WTC11 (cell line): ENCODE measurements at regions of chr12 and their contacts with region 1.

Region 1: GRCh38 chr12:52949413-52950331 is 754 bp downstream of the KRT18 start:
- DNase-seq: peak; percentile 43
- ATAC-seq: peak; percentile 30
- H3K4me3 Mint-ChIP-seq: peak overlapping the region; percentile 94
- H3K27ac Mint-ChIP-seq: peak overlapping the region; percentile 87
- H3K4me1 Mint-ChIP-seq: peaks cover 65% of the 10 kb centered on the region
- H3K27me3 Mint-ChIP-seq: no peaks in the 10 kb centered on the region
- CTCF ChIP-seq: no peak

Region 2: DNA sequence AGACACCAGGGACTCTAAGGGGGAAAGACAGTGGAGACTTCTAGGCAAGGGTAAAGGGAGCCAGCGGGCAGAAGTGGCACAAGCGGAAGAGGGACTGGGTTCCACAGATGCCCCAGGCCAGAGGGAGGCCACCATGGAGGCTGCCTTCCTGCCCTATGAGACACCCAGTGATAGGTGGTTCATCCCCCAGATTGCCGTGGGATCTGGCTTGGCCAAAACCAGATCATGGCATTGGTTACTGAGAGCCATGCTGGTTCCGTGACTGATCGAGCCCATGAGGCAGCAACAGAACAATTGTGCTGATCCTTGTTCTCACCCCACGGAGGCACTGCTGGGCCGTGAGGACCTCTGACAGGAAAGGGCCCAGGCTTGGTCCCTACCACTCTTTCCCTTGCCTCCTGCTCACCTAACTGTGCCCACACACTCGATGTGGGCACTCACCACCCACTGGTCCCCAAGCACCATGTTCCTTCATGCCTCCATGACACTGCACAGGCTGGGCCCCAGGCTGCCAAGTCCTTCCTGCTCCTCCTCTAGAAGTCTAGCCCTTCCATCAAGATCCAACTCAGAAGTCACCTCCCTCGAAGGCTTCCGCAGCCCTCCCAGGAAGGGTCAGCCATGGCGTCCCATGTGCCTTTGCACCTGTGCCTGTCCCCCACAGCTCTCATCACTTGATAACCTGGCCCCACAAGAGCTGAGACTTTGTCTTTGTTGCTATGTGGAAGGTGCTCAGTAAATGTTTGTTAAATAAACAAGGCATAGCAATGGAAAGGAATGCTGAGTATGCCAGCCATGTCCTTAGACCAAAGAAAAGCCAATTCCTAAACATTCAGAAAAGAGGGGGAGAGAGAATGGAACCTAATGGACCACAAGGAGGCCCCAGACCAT is 122.8 kb before region 1 on chr12:
- CTCF ChIA-PET with region 1: no interaction called
- POLR2A ChIA-PET with region 1: no interaction called
- DNase-seq: no peak
- ATAC-seq: peak; percentile 60
- H3K4me3 Mint-ChIP-seq: no peak overlapping the region
- H3K27ac Mint-ChIP-seq: no peak overlapping the region
- H3K4me1 Mint-ChIP-seq: peaks cover 7% of the 10 kb centered on the region
- H3K27me3 Mint-ChIP-seq: no peaks in the 10 kb centered on the region; the same call in 1 of the 2 replicates
- CTCF ChIP-seq: no peak

Region 3: GRCh38 chr12:52903285-52903854 is 46.3 kb before region 1 on chr12:
- CTCF ChIA-PET with region 1: interaction called, 36 read pairs
- POLR2A ChIA-PET with region 1: interaction called, 44 read pairs
- DNase-seq: peak; percentile 90
- ATAC-seq: peak; percentile 56
- H3K4me3 Mint-ChIP-seq: peak overlapping the region; percentile 92
- H3K27ac Mint-ChIP-seq: 0 out of 2 replicates have a peak overlapping the region, but pooled peaks have one; percentile 32
- H3K4me1 Mint-ChIP-seq: peaks cover 43% of the 10 kb centered on the region
- H3K27me3 Mint-ChIP-seq: no peaks in the 10 kb centered on the region
- CTCF ChIP-seq: no peak

Region 4: GRCh38 chr12:52924764-52925716 is 24.6 kb before region 1 on chr12:
- CTCF ChIA-PET with region 1: interaction called, 29 read pairs
- POLR2A ChIA-PET with region 1: interaction called, 10 read pairs
- DNase-seq: no peak
- ATAC-seq: no peak
- H3K4me3 Mint-ChIP-seq: no peak overlapping the region
- H3K27ac Mint-ChIP-seq: no peak overlapping the region; the same call in 1 of the 2 replicates
- H3K4me1 Mint-ChIP-seq: peaks cover 55% of the 10 kb centered on the region
- H3K27me3 Mint-ChIP-seq: no peaks in the 10 kb centered on the region
- CTCF ChIP-seq: no peak

Region 5: DNA sequence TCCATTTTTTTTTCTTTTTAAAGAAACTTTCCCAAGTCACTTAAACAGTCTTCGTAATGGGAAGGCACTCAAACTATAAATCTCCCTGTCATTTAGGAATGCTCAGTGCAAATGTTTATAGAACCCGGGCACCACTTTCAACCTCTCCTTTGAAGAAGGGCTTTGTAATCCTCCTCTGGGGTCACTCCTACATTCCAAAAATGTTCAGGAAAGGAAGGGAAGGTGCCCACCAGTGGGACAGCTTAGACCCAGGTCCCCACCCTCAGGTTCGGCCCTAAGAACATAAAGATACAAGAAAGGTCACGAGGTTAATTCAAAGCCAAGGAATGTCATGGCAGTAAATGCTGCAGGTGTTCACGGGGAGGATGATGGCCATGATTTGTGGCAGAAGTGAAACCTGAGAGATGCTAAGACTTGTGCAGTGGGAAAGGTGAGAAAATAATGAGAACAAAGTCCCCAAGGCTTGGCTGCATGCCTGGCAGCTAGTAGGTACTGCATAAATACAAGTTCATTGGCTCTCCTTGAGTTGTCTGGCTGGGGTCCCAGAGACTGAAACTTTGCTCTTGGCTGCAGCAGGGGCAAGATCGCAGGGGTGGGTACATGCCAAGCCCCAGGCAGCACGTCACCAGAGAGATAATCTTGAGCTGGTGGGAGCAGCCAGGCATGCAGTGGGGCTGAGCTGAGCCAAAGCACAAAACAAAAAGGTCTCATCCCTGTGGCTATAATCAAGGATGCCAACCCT is 20.3 kb after region 1 on chr12:
- CTCF ChIA-PET with region 1: interaction called, 13 read pairs
- POLR2A ChIA-PET with region 1: interaction called, 15 read pairs
- DNase-seq: no peak
- ATAC-seq: no peak
- H3K4me3 Mint-ChIP-seq: no peak overlapping the region
- H3K27ac Mint-ChIP-seq: no peak overlapping the region; the same call in 1 of the 2 replicates
- H3K4me1 Mint-ChIP-seq: peaks cover 26% of the 10 kb centered on the region
- H3K27me3 Mint-ChIP-seq: peaks cover 42% of the 10 kb centered on the region
- CTCF ChIP-seq: no peak

Region 6: DNA sequence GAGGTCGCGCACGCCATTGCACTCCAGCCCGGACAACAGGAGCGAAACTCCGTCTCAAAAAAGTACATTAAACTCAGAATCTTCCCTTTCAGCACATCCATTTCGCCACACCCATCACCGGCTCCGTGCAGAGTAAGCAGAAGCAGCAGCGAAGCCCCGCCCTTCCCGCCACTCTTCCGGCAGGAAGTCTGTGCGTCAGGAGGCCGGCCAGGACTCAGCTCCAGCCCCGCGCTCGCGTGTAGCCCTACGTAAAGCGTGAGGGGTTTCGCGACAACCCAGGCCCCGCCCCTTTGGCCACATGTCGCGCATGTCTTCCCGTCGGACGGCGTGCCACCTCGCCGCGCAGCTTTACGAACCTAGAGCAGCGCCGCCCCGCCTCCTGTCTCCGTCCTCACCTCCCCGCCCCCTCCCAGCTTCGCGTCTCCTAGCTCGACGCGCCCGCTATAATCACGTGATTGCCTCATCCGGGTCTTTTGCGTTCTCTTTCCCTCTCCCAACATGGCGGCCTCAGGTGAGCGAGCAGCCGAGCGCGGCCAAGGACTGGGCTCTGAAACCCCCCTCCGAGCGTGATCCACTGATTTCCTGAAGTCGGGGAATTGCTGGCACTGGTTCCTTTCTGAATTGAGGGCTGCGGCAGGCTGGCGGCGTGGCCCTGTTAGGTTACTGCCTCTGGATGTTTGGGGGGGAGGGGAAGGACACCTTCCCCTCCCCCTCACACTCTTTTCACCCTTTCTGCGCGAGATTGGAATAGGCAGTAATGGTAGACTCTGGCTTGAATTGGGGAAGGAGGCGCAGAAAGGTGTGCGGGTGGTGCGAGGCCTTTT is 56.5 kb after region 1 on chr12 and contains the start of gene EIF4B:
- CTCF ChIA-PET with region 1: interaction called, 4 read pairs
- POLR2A ChIA-PET with region 1: interaction called, 13 read pairs
- DNase-seq: peak; percentile 100
- ATAC-seq: peak; percentile 90
- H3K4me3 Mint-ChIP-seq: peak within 1 kb of the TSS; percentile 99
- H3K27ac Mint-ChIP-seq: peak within 1 kb of the TSS; percentile 100
- H3K4me1 Mint-ChIP-seq: peaks cover 50% of the 10 kb centered on the region
- H3K27me3 Mint-ChIP-seq: no peaks in the 10 kb centered on the region
- CTCF ChIP-seq: no peak
- total RNA-seq, gene EIF4B: 730 to 860 TPM (median 838 TPM) in 3 replicates